Activated naive CD4-positive, alpha-beta T cell treated with anti-CD3 and anti-CD28 coated beads for 36 hours (primary cell): ENCODE measurements at regions of chr13 and their contacts with region 1.

Region 1: DNA sequence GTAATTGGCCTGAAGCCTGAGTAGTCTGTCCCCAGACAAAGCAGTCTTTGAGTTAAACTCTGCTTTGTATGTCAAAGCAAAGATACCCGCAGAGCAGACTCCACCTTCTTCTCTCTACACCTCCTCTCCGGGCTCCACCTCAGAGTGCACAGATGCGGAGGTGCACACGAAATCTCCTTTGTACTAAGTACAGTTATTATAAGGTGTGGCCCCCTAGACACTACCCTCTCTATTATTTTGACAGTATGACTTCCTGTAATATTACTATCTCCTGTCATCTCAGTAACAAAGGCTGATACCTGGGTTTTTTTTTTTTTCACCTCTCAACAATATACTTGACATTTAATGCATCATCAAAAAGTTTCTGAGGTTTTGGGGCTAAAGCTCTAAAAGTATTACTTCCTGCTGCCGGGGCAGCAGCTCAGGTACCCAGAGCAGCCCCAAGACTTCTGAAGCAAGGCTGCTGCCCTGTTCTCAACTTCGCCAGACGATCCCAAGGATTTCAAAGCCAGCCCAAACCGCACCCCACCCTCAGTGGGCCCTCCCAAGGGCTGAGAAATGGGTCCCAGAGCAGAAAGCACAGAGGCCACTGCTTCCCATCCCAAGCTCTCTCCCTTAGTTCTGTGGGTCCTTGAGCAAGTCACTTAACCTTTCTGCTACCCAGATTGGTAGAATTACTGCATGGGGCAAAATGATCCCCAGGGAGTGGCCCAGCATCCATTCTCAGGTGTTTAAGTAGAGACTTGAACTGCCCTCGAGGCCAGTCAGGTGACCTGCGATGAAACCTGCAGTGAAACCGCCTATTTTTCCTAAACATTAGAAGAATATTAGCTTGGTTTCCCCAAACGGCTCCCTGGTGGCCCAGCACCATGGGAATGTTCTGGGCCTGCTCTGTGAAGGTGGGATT is 180.6 kb downstream of the FOXO1 start:
- DNase-seq: peak; percentile 86
- H3K4me3 Mint-ChIP-seq: peak overlapping the region; percentile 8
- H3K27ac Mint-ChIP-seq: peak overlapping the region; percentile 83
- H3K4me1 Mint-ChIP-seq: peaks cover 82% of the 10 kb centered on the region
- H3K27me3 Mint-ChIP-seq: no peaks in the 10 kb centered on the region

Region 2: DNA sequence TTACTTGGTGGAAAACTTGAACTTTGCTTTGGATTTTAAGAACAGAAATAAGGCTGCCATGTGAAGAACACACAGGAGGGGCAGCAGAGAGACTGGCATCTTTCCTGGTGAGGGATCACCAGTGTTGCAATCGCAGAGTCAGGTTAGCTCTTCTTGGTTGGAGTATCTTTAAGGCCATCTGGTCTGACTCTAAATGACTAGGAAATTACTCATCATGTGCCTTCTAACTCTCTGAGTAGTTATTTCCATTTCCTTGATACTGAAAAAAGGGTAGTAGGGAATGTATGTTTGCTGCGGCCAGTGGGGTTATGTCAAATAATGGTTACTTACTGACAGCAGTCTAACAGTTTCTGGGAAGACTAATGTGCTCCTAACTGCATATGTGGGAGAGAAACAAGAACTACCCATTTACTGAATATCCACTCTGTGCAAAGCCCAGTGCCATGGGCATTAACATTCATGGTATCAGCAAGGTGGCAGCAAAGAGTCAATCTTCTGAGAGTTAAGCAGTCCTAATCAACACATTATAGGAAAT is 708.3 kb before region 1 on chr13:
- CTCF ChIA-PET with region 1: no interaction called
- intact Hi-C with region 1: loop called (anchors 2 kb)
- DNase-seq: peak; percentile 70
- H3K4me3 Mint-ChIP-seq: no peak overlapping the region
- H3K27ac Mint-ChIP-seq: peak overlapping the region; percentile 80
- H3K4me1 Mint-ChIP-seq: peaks cover 46% of the 10 kb centered on the region
- H3K27me3 Mint-ChIP-seq: no peaks in the 10 kb centered on the region

Region 3: DNA sequence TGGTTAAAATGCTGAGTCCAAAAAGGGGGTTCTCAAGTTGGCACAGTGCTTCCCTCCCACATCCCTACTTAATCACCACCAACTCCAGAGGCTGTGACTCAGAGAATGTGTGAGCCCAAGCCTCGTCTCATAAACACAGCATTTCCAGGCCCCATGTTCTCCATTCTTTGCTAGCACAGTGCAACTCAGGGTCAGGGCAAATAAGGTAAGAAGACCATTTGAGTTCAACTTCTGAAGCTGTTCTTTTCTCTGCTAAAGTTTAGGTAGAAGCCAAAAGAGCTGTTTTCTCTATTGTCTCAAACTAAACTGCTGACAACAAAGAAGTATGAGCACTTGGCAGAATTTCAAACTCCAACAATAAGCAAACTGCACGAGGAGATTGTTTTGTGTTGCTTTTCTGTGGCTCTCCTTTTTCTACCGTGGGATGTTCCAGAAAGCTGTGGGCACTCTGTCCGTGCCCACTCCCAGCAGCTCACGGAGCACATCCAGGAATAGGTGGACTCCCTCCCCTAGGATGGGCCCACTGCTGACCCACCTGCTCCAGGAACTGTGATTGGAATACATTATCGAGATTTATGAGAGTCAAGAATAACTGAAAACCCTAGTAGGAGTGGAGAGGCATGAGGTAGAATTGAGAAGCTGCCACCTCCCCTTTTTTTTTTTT is 336.1 kb before region 1 on chr13:
- CTCF ChIA-PET with region 1: no interaction called
- intact Hi-C with region 1: loop called (anchors 5 kb)
- DNase-seq: peak; percentile 37
- H3K4me3 Mint-ChIP-seq: no peak overlapping the region
- H3K27ac Mint-ChIP-seq: peak overlapping the region; percentile 52
- H3K4me1 Mint-ChIP-seq: peaks cover 73% of the 10 kb centered on the region
- H3K27me3 Mint-ChIP-seq: no peaks in the 10 kb centered on the region

Region 4: DNA sequence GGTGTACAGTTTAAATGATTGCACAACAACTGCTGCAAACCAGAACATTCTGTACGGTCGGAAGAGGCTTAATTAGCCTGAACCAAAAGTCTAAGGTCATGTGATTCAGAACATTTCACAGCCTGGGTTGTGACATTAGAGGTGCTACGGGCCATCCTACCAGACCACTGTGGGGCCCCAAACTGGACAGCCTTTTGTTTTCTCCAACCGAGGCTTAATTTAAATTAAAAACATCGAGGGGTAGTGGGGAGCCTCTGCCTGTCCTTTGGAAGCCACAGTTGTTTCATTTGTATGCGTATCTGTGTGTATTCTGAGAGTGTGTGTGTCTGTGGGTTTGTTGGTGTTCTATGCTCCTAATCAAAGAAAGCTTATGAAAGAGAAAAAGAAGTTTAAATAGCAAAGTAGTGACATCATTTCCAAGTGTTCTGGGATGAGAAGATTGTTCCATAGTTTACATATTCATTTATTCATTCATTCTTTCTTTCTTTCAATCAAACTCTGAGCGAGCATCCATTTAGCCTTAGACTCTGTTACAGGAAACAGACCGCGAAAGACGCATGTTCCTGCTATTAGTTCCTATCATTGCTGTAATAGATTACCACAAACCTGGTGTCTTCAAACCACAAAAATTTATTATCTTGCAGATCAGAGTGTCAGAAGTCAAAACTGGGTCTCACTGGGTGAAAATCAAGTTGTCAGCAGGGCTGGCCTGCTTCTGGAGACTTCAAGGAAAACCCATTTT is 264.2 kb before region 1 on chr13:
- CTCF ChIA-PET with region 1: no interaction called
- intact Hi-C with region 1: loop called (anchors 1 kb)
- DNase-seq: peak; percentile 80
- H3K4me3 Mint-ChIP-seq: peak overlapping the region; percentile 25
- H3K27ac Mint-ChIP-seq: peak overlapping the region; percentile 92
- H3K4me1 Mint-ChIP-seq: peaks cover 69% of the 10 kb centered on the region
- H3K27me3 Mint-ChIP-seq: no peaks in the 10 kb centered on the region

Region 5: GRCh38 chr13:40388617-40389016 is 97.2 kb before region 1 on chr13:
- CTCF ChIA-PET with region 1: no interaction called
- intact Hi-C with region 1: loop called (anchors 1 kb)
- DNase-seq: peak; percentile 94
- H3K4me3 Mint-ChIP-seq: peak overlapping the region; percentile 77
- H3K27ac Mint-ChIP-seq: peak overlapping the region; percentile 92
- H3K4me1 Mint-ChIP-seq: peaks cover 51% of the 10 kb centered on the region
- H3K27me3 Mint-ChIP-seq: no peaks in the 10 kb centered on the region

Region 6: GRCh38 chr13:40432018-40432978 is 53.6 kb before region 1 on chr13:
- CTCF ChIA-PET with region 1: no interaction called
- intact Hi-C with region 1: no loop called
- DNase-seq: peak; percentile 38
- H3K4me3 Mint-ChIP-seq: no peak overlapping the region
- H3K27ac Mint-ChIP-seq: no peak overlapping the region
- H3K4me1 Mint-ChIP-seq: peaks cover 39% of the 10 kb centered on the region
- H3K27me3 Mint-ChIP-seq: no peaks in the 10 kb centered on the region

Region 7: GRCh38 chr13:40597740-40598370 is 112.0 kb after region 1 on chr13:
- CTCF ChIA-PET with region 1: no interaction called
- intact Hi-C with region 1: loop called (anchors 1 kb)
- DNase-seq: peak; percentile 24
- H3K4me3 Mint-ChIP-seq: peak overlapping the region; percentile 17
- H3K27ac Mint-ChIP-seq: peak overlapping the region; percentile 93
- H3K4me1 Mint-ChIP-seq: peaks cover 90% of the 10 kb centered on the region
- H3K27me3 Mint-ChIP-seq: no peaks in the 10 kb centered on the region

Region 8: GRCh38 chr13:41004875-41005693 is 519.2 kb after region 1 on chr13:
- CTCF ChIA-PET with region 1: no interaction called
- intact Hi-C with region 1: loop called (anchors 10 kb)
- DNase-seq: no peak
- H3K4me3 Mint-ChIP-seq: peak overlapping the region; percentile 55
- H3K27ac Mint-ChIP-seq: peak overlapping the region; percentile 93
- H3K4me1 Mint-ChIP-seq: peaks cover 70% of the 10 kb centered on the region
- H3K27me3 Mint-ChIP-seq: no peaks in the 10 kb centered on the region

Region 9: DNA sequence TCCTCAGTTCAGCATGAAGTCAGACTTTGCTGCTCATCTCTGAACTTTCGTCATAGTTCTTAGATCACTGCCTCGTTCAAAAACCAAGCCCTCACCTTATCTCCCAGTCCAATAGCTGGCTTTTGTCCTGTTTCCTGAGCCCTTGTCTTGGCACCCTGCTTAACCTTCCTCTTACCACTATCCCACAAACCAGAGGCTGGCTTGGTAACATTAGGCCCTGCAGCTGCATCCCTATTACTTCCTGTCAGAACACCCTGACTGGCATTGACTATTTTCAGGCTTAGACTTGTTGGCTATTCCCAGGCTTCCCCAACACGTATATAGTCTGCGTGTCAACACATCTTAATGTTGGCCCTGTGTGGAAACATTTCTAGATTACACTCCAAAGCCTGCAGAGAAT is 1302.7 kb after region 1 on chr13:
- CTCF ChIA-PET with region 1: no interaction called
- intact Hi-C with region 1: no loop called
- DNase-seq: no peak
- H3K4me3 Mint-ChIP-seq: no peak overlapping the region
- H3K27ac Mint-ChIP-seq: no peak overlapping the region
- H3K4me1 Mint-ChIP-seq: no peaks in the 10 kb centered on the region
- H3K27me3 Mint-ChIP-seq: no peaks in the 10 kb centered on the region